ENCODE measurements at regions of chr2 and their contacts with region 1.

Region 1: GRCh38 chr2:118221666-118222594 is 133.7 kb downstream of the INSIG2 start:
- DNase-seq: peak; percentile 49
- ATAC-seq: peak; percentile 64
- H3K4me3 Mint-ChIP-seq: no peak overlapping the region
- H3K27ac Mint-ChIP-seq: no peak overlapping the region
- H3K4me1 Mint-ChIP-seq: peaks cover 23% of the 10 kb centered on the region
- H3K27me3 Mint-ChIP-seq: peaks cover 63% of the 10 kb centered on the region

Region 2: GRCh38 chr2:118207889-118208288 is 14.0 kb before region 1 on chr2:
- CTCF ChIA-PET with region 1: interaction called, 15 read pairs
- POLR2A ChIA-PET with region 1: no interaction called
- DNase-seq: no peak
- ATAC-seq: no peak
- H3K4me3 Mint-ChIP-seq: no peak overlapping the region
- H3K27ac Mint-ChIP-seq: no peak overlapping the region
- H3K4me1 Mint-ChIP-seq: no peaks in the 10 kb centered on the region
- H3K27me3 Mint-ChIP-seq: peaks cover 27% of the 10 kb centered on the region

Region 3: DNA sequence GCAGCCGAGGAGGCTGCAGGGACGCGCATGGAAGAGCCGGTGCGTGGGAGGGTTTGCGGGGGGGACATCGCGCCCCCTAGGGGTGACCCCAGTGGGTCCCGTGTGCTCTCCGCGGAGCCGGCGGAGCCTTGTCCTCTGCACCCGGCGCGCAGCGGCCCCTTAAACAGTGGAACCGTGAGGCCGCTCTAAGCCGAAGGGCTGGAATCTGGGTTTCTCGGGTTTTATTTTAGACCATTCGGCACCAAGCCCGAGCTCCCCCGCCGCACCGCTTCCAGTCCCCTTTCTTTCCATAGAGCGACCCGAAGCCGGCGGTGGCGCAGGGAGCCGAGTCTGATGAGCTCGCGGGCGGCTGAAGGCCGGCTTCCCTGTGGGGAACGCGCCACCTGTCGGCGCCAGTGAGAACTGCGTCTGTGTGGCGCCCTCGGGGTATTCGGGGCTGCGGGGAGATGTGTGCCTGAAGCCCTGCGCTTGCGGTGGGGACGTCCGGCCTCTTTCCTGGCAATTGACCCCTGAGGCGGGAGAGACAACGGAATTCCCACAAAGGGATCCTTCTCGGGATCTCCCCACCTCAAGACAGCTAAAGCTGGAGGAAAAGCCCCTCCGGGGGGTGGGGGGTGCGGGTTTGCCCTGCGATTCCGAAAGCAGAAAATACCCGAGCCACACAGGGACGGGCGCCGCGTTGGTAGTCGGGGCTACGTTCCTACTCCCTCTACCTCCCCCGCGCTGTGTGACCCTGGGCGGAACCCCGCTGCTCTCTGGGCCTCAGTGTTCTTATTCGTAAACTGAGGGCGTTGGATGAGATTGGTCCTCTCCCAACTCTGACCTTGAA is 633.7 kb after region 1 on chr2:
- CTCF ChIA-PET with region 1: interaction called, 26 read pairs
- POLR2A ChIA-PET with region 1: no interaction called
- DNase-seq: peak; percentile 82
- ATAC-seq: peak; percentile 90
- H3K4me3 Mint-ChIP-seq: peak overlapping the region; percentile 42
- H3K27ac Mint-ChIP-seq: peak overlapping the region; percentile 11
- H3K4me1 Mint-ChIP-seq: peaks cover 11% of the 10 kb centered on the region
- H3K27me3 Mint-ChIP-seq: peaks cover 79% of the 10 kb centered on the region